ENCODE measurements at regions of chr9 and their contacts with region 1.

Region 1: DNA sequence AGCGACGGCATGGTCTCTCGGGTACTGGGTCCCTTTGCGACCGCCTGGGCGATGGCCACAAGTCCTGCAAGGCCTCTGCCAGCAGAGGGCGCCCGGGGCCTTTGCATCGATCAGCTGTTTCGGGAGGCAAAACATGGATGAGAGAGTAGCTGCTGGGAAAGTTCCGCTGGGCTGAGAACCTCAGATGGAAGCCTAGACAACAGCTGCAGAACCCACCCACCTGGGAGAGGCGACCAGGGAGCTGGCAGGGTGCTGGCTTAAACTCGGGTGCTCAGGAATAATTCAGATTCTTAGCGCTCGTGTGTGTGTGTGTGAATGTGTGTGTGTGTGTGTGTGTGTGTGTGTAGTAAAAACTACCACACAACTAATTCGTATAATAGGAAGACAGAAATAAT is 50.0 kb downstream of the TRIM32 start:
- H3K4me3 Mint-ChIP-seq: no peak overlapping the region
- H3K27ac Mint-ChIP-seq: no peak overlapping the region
- H3K4me1 Mint-ChIP-seq: peaks cover 23% of the 10 kb centered on the region
- H3K27me3 Mint-ChIP-seq: peaks cover 8% of the 10 kb centered on the region

Region 2: DNA sequence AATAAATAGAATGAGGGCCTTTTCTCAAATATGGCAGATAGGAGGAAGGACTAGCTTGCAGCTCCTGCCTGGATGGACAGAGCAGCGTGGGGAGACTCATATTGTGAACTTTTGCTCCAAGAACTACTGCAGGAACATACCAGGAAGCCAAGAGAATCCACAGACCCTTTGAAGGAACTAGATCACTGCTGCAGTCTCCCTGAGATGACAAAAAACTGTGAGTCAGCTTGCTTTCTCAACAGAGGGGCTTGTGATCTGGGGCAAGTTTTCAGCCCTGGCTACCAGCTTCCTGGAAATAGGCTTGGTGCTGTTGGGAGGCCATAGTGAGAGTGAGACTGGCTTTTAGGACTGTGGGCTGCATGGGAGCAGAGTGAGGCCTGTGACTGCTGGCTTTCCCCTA is 220.7 kb before region 1 on chr9:
- intact Hi-C with region 1: no loop called
- H3K4me3 Mint-ChIP-seq: no peak overlapping the region
- H3K27ac Mint-ChIP-seq: no peak overlapping the region
- H3K4me1 Mint-ChIP-seq: no peaks in the 10 kb centered on the region
- H3K27me3 Mint-ChIP-seq: no peaks in the 10 kb centered on the region

Region 3: DNA sequence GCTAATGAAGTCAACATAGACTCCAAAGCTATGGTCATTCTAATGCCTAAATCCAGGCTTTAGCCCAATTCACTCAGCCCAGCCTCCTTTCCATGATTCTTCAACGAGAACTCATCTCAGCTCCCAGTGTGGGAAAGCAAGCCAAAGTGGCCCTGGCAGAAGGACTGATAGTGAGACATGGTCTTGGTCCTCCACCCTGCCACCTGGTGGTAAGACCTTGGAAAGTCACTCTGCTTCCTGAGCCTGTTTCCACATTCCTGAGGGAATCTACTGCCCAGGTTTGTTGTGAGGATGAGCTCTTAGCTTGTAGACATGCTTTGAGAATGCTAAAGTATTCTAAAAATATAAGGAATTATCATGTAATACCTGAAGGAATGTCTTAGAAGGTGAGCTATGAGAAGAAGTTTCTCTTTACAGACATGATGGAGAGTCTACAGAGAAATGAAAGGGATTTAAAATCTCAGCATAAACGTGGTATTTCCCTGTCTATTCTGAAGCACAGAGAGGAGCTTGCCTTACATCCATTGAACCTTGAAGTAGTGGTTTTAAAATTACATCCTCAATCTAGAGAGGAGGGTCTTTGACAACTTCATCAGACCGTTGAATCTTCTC is 123.5 kb after region 1 on chr9:
- intact Hi-C with region 1: loop called (anchors 1 kb)
- H3K4me3 Mint-ChIP-seq: no peak overlapping the region
- H3K27ac Mint-ChIP-seq: no peak overlapping the region
- H3K4me1 Mint-ChIP-seq: no peaks in the 10 kb centered on the region
- H3K27me3 Mint-ChIP-seq: peaks cover 3% of the 10 kb centered on the region

Region 4: GRCh38 chr9:117411548-117411947 is 674.4 kb after region 1 on chr9:
- intact Hi-C with region 1: loop called (anchors 5 kb)
- H3K4me3 Mint-ChIP-seq: no peak overlapping the region
- H3K27ac Mint-ChIP-seq: no peak overlapping the region
- H3K4me1 Mint-ChIP-seq: no peaks in the 10 kb centered on the region
- H3K27me3 Mint-ChIP-seq: peaks cover 44% of the 10 kb centered on the region

Region 5: GRCh38 chr9:117555964-117556629 is 818.9 kb after region 1 on chr9:
- intact Hi-C with region 1: loop called (anchors 5 kb)
- H3K4me3 Mint-ChIP-seq: no peak overlapping the region
- H3K27ac Mint-ChIP-seq: no peak overlapping the region
- H3K4me1 Mint-ChIP-seq: no peaks in the 10 kb centered on the region
- H3K27me3 Mint-ChIP-seq: no peaks in the 10 kb centered on the region